Activated CD4-positive, alpha-beta T cell treated with anti-CD3 and anti-CD28 coated beads for 36 hours (primary cell): ENCODE measurements at regions of chr22 and their contacts with region 1.

Region 1: DNA sequence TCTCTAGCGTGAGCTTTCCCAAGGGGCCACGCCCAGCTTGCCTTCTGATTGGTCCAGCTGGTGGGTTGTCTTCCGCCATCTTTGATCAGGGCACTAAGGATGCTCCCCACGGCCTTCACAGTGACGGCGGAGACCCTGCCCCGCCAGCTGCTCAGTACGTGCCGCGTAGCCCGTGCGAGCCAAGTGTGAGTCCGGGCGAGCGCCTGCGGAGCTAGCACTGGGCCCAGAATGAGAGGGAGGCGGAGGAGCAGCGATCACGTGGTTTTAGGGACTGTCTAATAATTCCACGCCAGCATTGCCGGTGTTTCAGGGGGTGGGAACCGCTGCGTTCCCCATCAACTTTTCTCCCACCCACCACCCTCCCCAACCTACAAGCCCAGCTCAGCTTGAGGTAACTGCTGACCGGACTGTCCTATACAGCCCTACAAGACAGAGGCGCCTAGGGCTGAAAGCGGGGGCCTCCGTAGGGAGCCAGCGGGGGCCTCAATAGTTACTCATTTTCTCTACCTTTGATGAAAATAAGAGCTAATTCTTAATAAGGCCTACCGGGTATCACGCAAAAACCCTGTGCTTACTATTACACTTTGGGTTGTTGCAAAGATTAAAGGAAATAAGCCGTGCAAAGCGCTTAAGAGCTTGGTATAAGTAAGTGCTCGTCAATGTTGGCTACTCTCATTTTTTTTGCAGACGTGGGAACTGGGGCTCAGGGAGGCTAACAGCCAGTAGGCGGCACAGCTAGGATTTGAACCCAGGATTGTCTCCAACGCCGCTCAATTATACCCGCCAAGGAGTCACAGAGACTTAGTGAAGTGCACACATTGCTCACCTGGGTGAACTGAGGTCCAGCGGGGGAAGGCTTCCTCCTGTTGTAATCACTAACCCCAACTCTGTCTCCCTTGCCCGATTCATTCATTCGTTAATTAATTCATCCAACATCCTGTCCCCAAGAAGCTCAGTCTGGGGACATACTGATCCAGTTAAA is 1.3 kb upstream of the MTFP1 start:
- DNase-seq: peak; percentile 99
- ATAC-seq: peak; percentile 85
- H3K4me3 Mint-ChIP-seq: peak overlapping the region; percentile 93
- H3K27ac Mint-ChIP-seq: peak overlapping the region; percentile 97
- H3K4me1 Mint-ChIP-seq: peaks cover 49% of the 10 kb centered on the region
- H3K27me3 Mint-ChIP-seq: no peaks in the 10 kb centered on the region

Region 2: GRCh38 chr22:28800308-28801077 is 1623.8 kb before region 1 on chr22 and contains the start of gene XBP1:
- CTCF ChIA-PET with region 1: no interaction called
- POLR2A ChIA-PET with region 1: no interaction called
- intact Hi-C with region 1: loop called in 1 of 2 experiments (anchors 10 kb)
- DNase-seq: peak; percentile 93
- ATAC-seq: peak; percentile 85
- H3K4me3 Mint-ChIP-seq: peak within 1 kb of the TSS; percentile 84
- H3K27ac Mint-ChIP-seq: peak within 1 kb of the TSS; percentile 99
- H3K4me1 Mint-ChIP-seq: peaks cover 44% of the 10 kb centered on the region
- H3K27me3 Mint-ChIP-seq: no peaks in the 10 kb centered on the region
- total RNA-seq, gene XBP1: 88.8 to 101 TPM

Region 3: DNA sequence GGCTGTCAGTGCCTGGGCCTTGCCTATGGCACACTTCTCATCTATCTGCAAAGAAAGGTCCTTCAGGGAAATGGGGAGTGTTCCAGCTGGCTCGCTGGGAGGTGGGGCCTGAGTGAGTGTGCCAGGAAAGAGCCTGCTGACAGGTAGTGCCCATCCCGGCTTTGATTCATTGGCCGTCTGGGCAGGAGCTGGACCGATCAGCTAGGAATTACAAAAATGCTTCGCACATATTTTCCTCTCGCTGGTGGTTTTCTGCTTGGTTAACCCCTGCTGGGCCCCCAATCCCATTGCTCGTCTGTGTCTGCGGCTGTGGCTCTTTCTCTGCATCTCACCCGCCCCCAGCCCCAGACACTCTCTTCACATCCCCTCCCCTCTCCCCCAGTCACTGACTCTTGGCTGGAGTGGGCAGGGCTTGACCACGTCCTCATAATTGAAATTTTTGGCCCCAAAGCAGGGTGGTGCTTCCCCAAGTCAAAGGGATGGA is 188.5 kb before region 1 on chr22:
- CTCF ChIA-PET with region 1: no interaction called
- POLR2A ChIA-PET with region 1: no interaction called
- intact Hi-C with region 1: no loop called
- DNase-seq: no peak
- ATAC-seq: no peak
- H3K4me3 Mint-ChIP-seq: no peak overlapping the region
- H3K27ac Mint-ChIP-seq: no peak overlapping the region
- H3K4me1 Mint-ChIP-seq: no peaks in the 10 kb centered on the region
- H3K27me3 Mint-ChIP-seq: no peaks in the 10 kb centered on the region

Region 4: DNA sequence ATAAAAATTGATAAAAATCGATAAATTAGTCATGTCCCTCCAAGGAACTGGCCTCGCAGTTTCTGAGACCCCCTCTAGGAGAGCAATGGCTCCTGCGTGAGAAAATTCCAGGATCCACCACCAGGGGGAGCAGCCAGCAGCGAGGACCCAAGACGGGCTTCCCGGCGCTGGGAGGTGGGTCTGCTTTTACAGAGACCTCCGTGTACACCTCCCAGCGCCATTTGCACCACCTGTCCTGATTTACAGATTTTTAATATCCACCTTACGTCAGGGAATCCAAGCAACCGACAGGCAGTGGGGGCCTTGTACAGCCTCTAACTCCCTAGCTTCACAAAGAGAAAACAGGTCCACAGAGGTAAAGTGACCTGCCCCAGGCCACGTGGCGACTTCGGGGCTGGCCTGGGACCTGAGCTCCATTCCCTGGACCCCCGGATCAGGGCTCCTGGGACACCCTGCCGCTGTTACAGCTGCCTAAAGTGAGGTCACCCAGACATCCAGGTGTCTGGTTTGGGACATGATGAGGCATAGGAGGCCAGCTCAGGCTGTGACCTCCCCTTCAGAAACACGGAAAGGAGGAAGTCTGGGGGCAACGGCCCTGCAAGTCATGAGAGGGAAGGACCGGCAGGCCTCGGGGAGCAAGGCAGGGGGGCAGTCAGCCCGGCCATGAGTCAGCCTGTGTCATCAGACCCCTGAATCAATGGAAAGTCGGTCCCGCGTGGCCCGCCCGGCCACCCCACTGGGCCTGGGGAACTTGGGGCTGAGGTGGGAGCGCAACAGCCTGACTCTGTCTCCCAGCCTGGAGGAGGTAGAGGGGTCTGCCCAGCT is 161.1 kb before region 1 on chr22:
- CTCF ChIA-PET with region 1: interaction called, 3 read pairs
- POLR2A ChIA-PET with region 1: no interaction called
- intact Hi-C with region 1: loop called in 1 of 2 experiments (anchors 1 kb)
- DNase-seq: peak; percentile 88
- ATAC-seq: no peak
- H3K4me3 Mint-ChIP-seq: peak overlapping the region; percentile 62
- H3K27ac Mint-ChIP-seq: peak overlapping the region; percentile 51
- H3K4me1 Mint-ChIP-seq: peaks cover 33% of the 10 kb centered on the region
- H3K27me3 Mint-ChIP-seq: no peaks in the 10 kb centered on the region

Region 5: DNA sequence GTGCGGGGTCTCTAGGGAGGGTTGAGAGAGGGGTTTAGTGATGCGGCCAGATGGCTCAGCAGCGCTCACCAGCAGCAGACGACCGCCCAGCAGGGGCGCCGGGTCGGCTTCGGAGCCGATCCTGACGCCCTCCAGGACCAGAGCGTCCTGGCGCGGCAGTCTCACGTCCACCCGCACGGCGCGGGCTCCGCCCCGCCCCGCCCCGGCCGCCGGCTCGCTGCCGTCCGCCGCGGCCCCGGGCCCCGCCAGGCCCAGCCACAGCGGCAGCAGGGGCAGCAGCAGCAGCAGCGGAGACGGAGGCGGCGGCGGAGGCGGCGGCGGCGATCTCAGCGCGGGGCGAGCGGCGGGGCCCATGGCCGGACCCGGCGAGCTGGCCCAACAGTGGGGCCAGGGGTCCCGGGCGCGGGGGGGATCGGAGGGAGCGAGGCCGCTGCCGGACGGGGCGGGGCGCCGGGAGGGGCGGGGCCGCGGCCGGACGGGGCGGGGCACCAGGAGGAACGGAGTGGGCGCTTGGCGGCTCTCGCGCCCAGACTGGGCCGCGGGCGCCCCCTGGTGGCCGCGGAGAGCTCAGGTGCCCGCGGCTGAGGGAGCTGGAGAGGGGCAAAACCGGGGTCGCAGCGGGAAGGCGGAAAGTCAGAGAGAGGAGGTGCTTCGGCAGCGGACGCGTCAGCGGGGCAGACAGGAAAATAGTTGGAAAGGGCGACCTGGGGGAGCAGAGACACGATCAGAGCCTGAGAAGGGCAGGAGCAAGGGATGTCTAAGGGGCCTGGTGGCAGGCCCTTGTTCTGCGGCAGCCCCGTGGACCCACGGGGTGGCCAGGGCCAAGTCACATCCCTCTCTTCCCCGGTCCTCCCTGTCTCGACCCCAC is 37.1 kb before region 1 on chr22 and contains the start of gene RNF215:
- CTCF ChIA-PET with region 1: interaction called, 90 read pairs
- POLR2A ChIA-PET with region 1: interaction called, 5 read pairs
- intact Hi-C with region 1: loop called (anchors 1 kb)
- DNase-seq: peak; percentile 87
- ATAC-seq: peak; percentile 77
- H3K4me3 Mint-ChIP-seq: peak within 1 kb of the TSS; percentile 73
- H3K27ac Mint-ChIP-seq: peak within 1 kb of the TSS; percentile 9
- H3K4me1 Mint-ChIP-seq: peaks cover 15% of the 10 kb centered on the region
- H3K27me3 Mint-ChIP-seq: no peaks in the 10 kb centered on the region
- total RNA-seq, gene RNF215: 4.3 to 7.4 TPM

Region 6: DNA sequence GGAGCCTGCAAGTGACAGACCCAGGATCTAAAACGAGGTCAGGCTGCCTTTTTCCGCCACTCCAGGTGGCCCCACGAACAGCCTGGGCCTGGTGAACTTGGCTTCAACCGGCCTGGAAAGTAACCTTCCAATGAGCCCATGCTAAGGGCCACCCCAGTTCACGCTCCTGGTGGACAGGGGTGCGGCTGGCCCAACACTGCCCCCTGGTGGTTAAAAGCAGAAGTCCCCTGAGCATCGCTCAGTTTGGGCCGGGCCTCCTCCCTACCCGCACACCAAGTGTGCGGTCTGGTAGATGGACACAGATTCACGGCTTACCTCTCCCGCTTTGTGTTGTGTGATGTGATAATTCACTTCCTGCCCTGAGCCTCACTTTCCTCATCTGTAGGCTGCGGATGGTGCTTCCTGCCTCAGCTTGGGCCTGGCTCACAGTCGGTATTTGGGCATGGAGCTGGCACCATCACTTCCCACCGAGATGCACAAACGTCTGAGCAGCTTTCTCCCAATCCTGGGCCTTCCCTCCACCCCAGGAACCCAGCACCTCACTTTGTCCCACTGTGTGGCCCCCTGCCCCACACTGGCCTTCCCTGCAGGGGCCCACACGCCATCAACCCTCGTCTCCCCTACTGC is 61.2 kb after region 1 on chr22:
- CTCF ChIA-PET with region 1: interaction called, 6 read pairs
- POLR2A ChIA-PET with region 1: no interaction called
- intact Hi-C with region 1: loop called in 1 of 2 experiments (anchors 1 kb)
- DNase-seq: peak; percentile 86
- ATAC-seq: peak; percentile 100
- H3K4me3 Mint-ChIP-seq: no peak overlapping the region
- H3K27ac Mint-ChIP-seq: no peak overlapping the region
- H3K4me1 Mint-ChIP-seq: no peaks in the 10 kb centered on the region
- H3K27me3 Mint-ChIP-seq: no peaks in the 10 kb centered on the region

Region 7: DNA sequence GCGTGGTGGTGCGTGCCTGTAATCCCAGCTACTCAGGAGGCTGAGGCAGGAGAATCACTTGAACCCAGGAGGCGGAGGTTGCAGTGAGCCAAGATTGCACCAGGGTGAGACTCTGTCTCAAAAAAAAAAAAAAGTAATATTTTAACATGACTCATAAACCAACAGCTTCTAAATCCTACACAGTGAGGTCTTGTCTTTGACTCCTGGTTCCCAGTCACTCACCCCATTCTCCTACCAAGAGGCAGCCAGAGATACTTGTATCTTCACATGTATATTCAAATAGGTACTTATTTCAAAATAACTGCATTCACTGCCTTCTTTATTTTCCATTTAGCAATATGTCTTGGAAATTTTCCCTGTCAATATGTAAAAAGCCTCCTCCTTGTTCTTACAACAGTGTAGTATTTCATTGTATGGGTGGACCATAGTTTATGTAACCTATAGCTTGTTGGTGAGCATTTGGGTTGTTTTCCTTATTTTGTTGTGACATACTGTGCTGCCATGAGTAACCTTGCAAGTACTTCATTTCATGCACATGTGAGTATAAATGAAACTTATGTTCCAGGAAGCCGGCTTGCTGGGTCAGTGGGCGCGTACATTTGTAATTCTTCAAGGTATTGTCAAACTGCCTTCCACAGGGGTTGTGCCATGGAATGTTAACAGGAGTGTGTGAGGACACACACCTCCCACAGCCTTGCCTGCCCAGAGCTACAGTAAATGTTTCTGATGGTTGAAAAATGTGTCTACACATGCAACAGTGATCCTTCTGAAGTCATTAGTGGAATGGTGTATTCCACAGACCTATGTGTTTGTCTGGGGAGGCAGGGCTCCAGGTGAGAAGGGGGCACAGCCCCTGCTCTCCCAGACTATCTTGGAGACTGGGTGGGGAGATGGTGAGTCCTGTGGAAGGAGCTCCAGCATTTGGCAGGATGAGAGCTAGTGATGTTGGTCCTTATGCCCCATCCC is 318.3 kb after region 1 on chr22:
- CTCF ChIA-PET with region 1: no interaction called
- POLR2A ChIA-PET with region 1: no interaction called
- intact Hi-C with region 1: loop called in 1 of 2 experiments (anchors 5 kb)
- DNase-seq: peak; percentile 69
- ATAC-seq: peak; percentile 61
- H3K4me3 Mint-ChIP-seq: peak overlapping the region; percentile 6
- H3K27ac Mint-ChIP-seq: peak overlapping the region; percentile 82
- H3K4me1 Mint-ChIP-seq: peaks cover 64% of the 10 kb centered on the region
- H3K27me3 Mint-ChIP-seq: peaks cover 7% of the 10 kb centered on the region

Region 8: GRCh38 chr22:31399211-31400028 is 975.1 kb after region 1 on chr22 and contains the start of gene DRG1:
- CTCF ChIA-PET with region 1: no interaction called
- POLR2A ChIA-PET with region 1: no interaction called
- intact Hi-C with region 1: loop called in 1 of 2 experiments (anchors 5 kb)
- DNase-seq: peak; percentile 99
- ATAC-seq: peak; percentile 98
- H3K4me3 Mint-ChIP-seq: peak within 1 kb of the TSS; percentile 99
- H3K27ac Mint-ChIP-seq: peak within 1 kb of the TSS; percentile 91
- H3K4me1 Mint-ChIP-seq: peaks cover 18% of the 10 kb centered on the region
- H3K27me3 Mint-ChIP-seq: peaks cover under 1% of the 10 kb centered on the region
- total RNA-seq, gene DRG1: 104 to 106 TPM